AG04450 (cell line): ENCODE measurements at regions of chr16 and their contacts with region 1.

Region 1: GRCh38 chr16:74511961-74512360 is 90.7 kb upstream of the CLEC18B start:
- DNase-seq: no peak
- H3K4me3 ChIP-seq: no peak overlapping the region
- H3K27ac ChIP-seq: no peak overlapping the region
- H3K27me3 ChIP-seq: no peaks in the 10 kb centered on the region
- CTCF ChIP-seq: no peak

Region 2: GRCh38 chr16:74477226-74477625 is 34.7 kb before region 1 on chr16:
- CTCF ChIA-PET with region 1: no interaction called
- POLR2A ChIA-PET with region 1: no interaction called
- DNase-seq: no peak
- H3K4me3 ChIP-seq: no peak overlapping the region
- H3K27ac ChIP-seq: no peak overlapping the region
- H3K27me3 ChIP-seq: no peaks in the 10 kb centered on the region
- CTCF ChIP-seq: no peak

Region 3: DNA sequence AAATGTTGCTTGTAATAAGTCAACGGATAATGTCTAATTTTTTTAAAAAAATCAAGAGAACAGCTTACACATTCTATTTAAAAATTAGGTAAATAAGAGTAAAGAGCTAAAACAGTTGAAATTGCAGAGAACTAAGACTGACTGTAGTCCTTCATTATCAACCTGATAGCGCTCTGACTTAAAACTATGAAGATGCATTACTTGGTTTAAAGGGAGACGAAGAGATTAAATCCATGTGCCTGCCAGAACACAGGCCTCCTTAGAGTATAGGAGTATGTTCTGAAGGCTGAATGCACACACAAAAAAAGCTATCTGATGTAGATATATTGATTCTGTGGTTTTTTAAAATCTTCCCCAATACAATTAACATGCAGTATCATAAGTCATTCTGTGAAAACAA is 66.5 kb after region 1 on chr16:
- CTCF ChIA-PET with region 1: interaction called, 4 read pairs
- POLR2A ChIA-PET with region 1: interaction called, 15 read pairs
- DNase-seq: no peak
- H3K4me3 ChIP-seq: no peak overlapping the region
- H3K27ac ChIP-seq: no peak overlapping the region
- H3K27me3 ChIP-seq: no peaks in the 10 kb centered on the region
- CTCF ChIP-seq: no peak